OCI-LY7 (cell line): ENCODE measurements at regions of chr3 and their contacts with region 1.

Region 1: GRCh38 chr3:183099026-183099837 is at the start of gene MCCC1:
- DNase-seq: peak; percentile 99
- H3K4me3 ChIP-seq: peak within 1 kb of the TSS; percentile 82
- H3K27ac ChIP-seq: peak within 1 kb of the TSS; percentile 75
- H3K4me1 ChIP-seq: peaks cover 20% of the 10 kb centered on the region
- CTCF ChIP-seq: no peak
- total RNA-seq, gene MCCC1: 29.9 and 39.9 TPM in 2 replicates

Region 2: GRCh38 chr3:182979674-182980191 is 119.5 kb before region 1 on chr3:
- CTCF ChIA-PET with region 1: no interaction called
- POLR2A ChIA-PET with region 1: interaction called, 3 read pairs
- intact Hi-C with region 1: loop called (anchors 5 kb)
- DNase-seq: peak; percentile 52
- H3K4me3 ChIP-seq: peak overlapping the region; percentile 91
- H3K27ac ChIP-seq: peak overlapping the region; percentile 50
- H3K4me1 ChIP-seq: peaks cover 37% of the 10 kb centered on the region
- CTCF ChIP-seq: no peak

Region 3: GRCh38 chr3:183085634-183086390 is 13.4 kb before region 1 on chr3:
- CTCF ChIA-PET with region 1: no interaction called
- POLR2A ChIA-PET with region 1: interaction called, 16 read pairs
- intact Hi-C with region 1: no loop called
- DNase-seq: peak; percentile 19
- H3K4me3 ChIP-seq: no peak overlapping the region
- H3K27ac ChIP-seq: no peak overlapping the region
- H3K4me1 ChIP-seq: no peaks in the 10 kb centered on the region
- CTCF ChIP-seq: peak; percentile 72

Region 4: DNA sequence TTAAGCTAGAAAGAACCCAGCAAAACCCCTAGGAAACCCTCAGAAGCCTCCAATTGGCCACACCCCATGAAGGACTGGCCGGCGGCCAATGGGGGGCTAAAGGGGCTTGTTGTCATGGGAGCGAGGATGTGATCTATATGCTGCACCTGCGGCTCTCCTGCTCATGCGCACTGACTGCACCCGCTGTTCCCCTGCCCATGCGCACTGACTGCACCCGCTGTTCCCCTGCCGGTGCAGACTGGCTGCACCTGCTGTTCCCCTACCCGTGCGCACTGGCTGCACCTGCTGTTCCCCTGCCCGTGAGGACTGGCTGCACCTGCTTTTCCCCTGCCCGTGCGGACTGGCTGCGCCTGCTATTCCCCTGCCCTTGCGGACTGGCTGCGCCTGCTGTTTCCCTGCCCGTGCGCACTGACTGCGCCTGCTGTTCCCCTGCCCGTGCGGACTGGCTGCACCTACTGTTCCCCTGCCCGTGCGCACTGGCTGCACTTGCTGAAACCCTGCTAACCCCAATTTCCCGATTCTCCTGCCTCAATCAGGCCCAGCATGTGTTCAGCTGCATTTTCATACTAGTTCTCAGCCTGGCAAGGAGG is 16.9 kb after region 1 on chr3:
- CTCF ChIA-PET with region 1: no interaction called
- POLR2A ChIA-PET with region 1: interaction called, 8 read pairs
- intact Hi-C with region 1: loop called (anchors 1 kb)
- DNase-seq: peak; percentile 99
- H3K4me3 ChIP-seq: peak overlapping the region; percentile 56
- H3K27ac ChIP-seq: peak overlapping the region; percentile 67
- H3K4me1 ChIP-seq: peaks cover 32% of the 10 kb centered on the region
- CTCF ChIP-seq: no peak